ENCODE measurements at regions of chr9 and their contacts with region 1.

Region 1: DNA sequence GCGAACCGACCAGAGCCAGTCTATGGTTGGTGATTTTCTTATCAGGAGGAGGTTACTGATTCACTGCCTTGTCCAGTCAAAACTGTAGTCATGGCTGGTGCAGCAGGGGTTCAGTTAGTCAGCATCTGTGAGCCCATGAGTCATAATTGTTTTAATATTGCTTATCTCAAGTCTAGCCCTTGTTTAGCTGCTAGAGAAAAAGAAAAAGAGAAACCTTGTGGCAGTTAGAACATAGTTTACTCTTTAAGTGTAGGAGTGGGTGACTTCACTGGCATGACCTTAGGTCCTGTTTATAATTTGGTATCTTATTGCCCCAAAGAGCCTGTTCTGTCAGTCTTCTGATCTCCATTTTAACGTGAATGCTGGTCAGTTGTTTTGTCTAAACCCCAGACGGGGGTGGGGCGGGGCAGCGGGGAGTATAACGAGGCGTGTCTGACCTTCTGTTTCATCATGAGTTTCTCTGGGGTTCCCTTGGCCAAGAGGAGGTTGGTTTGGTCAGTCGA is 76.9 kb upstream of the NFIL3 start:
- DNase-seq: no peak
- ATAC-seq: peak in 1 of 2 donors; percentile 93

Region 2: DNA sequence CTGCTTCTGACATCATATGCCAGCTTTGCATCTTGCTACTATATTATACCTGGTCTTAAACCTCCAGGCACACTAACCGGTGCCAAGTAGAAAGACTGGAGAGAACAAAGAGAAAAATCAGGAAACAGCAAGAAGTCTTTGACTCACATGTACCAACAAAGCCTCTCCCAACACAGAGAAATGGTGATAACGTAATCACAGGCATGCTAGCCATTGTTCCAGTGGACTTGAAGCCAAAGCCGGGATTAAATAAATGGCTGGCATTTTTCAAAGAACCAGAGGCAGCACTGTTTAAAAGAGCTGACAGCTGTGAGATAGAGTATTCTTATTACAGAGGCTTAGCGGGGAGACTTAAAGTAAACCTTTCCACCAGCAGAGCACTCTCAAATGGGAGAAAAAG is 71.5 kb after region 1 on chr9:
- intact Hi-C with region 1: loop called in 1 of 2 experiments (anchors 10 kb)
- DNase-seq: no peak
- ATAC-seq: no peak